ENCODE measurements at regions of chr6 and their contacts with region 1.

Region 1: DNA sequence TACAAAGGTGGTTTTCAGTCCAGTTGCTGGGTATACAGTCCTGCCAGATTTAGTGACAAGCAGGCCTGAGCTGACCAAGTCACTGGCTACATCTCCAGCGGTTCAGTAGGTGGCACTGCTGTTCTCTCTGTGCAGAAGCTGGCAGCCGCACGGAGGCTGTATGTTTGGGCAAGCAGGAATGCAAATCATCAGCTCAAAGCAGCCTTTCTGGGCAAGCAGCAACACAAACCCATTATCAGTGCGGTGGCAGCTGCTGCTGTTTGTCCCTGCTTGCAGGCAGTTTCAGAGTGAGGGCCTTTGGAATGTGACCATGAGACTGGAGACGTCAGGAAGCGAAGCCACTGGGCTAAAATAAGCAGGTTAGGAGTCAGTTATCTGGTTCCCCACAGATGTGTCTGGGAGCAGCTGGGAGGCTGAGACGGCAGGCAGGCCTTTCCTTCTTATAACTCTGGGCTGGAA is 72.5 kb downstream of the TXLNB start:
- DNase-seq: peak; percentile 83
- ATAC-seq: peak; percentile 100
- H3K4me3 ChIP-seq: no peak overlapping the region
- H3K4me3 Mint-ChIP-seq: peak overlapping the region; percentile 40
- H3K27ac ChIP-seq: no peak overlapping the region
- H3K27ac Mint-ChIP-seq: peak overlapping the region; percentile 79
- H3K4me1 ChIP-seq: peaks cover 4 to 8% of the 10 kb centered on the region in 2 donors
- H3K4me1 Mint-ChIP-seq: peaks cover 13% of the 10 kb centered on the region
- H3K27me3 ChIP-seq: no peaks in the 10 kb centered on the region
- H3K27me3 Mint-ChIP-seq: no peaks in the 10 kb centered on the region
- CTCF ChIP-seq: peak; percentile 84

Region 2: GRCh38 chr6:138817822-138818308 is 401.4 kb before region 1 on chr6:
- CTCF ChIA-PET with region 1: interaction called, 22 read pairs
- POLR2A ChIA-PET with region 1: no interaction called
- intact Hi-C with region 1: loop called (anchors 1 kb)
- DNase-seq: peak; percentile 13
- ATAC-seq: peak; percentile 15
- H3K4me3 ChIP-seq: no peak overlapping the region
- H3K4me3 Mint-ChIP-seq: no peak overlapping the region
- H3K27ac ChIP-seq: peak overlapping the region in 1 of 2 donors; percentile 28
- H3K27ac Mint-ChIP-seq: peak overlapping the region; percentile 68
- H3K4me1 ChIP-seq: peaks cover 11 to 20% of the 10 kb centered on the region in 2 donors
- H3K4me1 Mint-ChIP-seq: peaks cover 30% of the 10 kb centered on the region
- H3K27me3 ChIP-seq: no peaks in the 10 kb centered on the region
- H3K27me3 Mint-ChIP-seq: no peaks in the 10 kb centered on the region
- CTCF ChIP-seq: no peak

Region 3: GRCh38 chr6:139124887-139125672 is 94.2 kb before region 1 on chr6:
- CTCF ChIA-PET with region 1: interaction called, 50 read pairs
- POLR2A ChIA-PET with region 1: no interaction called
- intact Hi-C with region 1: loop called (anchors 1 kb)
- DNase-seq: peak; percentile 84
- ATAC-seq: peak; percentile 100
- H3K4me3 ChIP-seq: peak overlapping the region in 2 of 5 experiments; percentile 13 to 18
- H3K4me3 Mint-ChIP-seq: peak overlapping the region; percentile 76
- H3K27ac ChIP-seq: peak overlapping the region; percentile 58 to 76
- H3K27ac Mint-ChIP-seq: peak overlapping the region; percentile 93
- H3K4me1 ChIP-seq: peaks cover 20 to 22% of the 10 kb centered on the region in 2 donors
- H3K4me1 Mint-ChIP-seq: peaks cover 41% of the 10 kb centered on the region
- H3K27me3 ChIP-seq: no peaks in the 10 kb centered on the region
- H3K27me3 Mint-ChIP-seq: no peaks in the 10 kb centered on the region
- CTCF ChIP-seq: peak; percentile 73

Region 4: GRCh38 chr6:139204978-139205377 is 14.3 kb before region 1 on chr6:
- CTCF ChIA-PET with region 1: interaction called, 12 read pairs
- POLR2A ChIA-PET with region 1: no interaction called
- intact Hi-C with region 1: no loop called
- DNase-seq: no peak
- ATAC-seq: no peak
- H3K4me3 ChIP-seq: no peak overlapping the region
- H3K4me3 Mint-ChIP-seq: no peak overlapping the region
- H3K27ac ChIP-seq: no peak overlapping the region
- H3K27ac Mint-ChIP-seq: no peak overlapping the region
- H3K4me1 ChIP-seq: no peaks in the 10 kb centered on the region
- H3K4me1 Mint-ChIP-seq: no peaks in the 10 kb centered on the region
- H3K27me3 ChIP-seq: no peaks in the 10 kb centered on the region
- H3K27me3 Mint-ChIP-seq: no peaks in the 10 kb centered on the region
- CTCF ChIP-seq: no peak

Region 5: GRCh38 chr6:139250296-139251044 is 31.2 kb after region 1 on chr6:
- CTCF ChIA-PET with region 1: interaction called, 16 read pairs
- POLR2A ChIA-PET with region 1: interaction called, 6 read pairs
- intact Hi-C with region 1: loop called (anchors 1 kb)
- DNase-seq: peak; percentile 65
- ATAC-seq: peak; percentile 99
- H3K4me3 ChIP-seq: no peak overlapping the region
- H3K4me3 Mint-ChIP-seq: no peak overlapping the region
- H3K27ac ChIP-seq: no peak overlapping the region
- H3K27ac Mint-ChIP-seq: no peak overlapping the region
- H3K4me1 ChIP-seq: peaks cover 5 to 6% of the 10 kb centered on the region in 2 donors
- H3K4me1 Mint-ChIP-seq: peaks cover 13% of the 10 kb centered on the region
- H3K27me3 ChIP-seq: no peaks in the 10 kb centered on the region
- H3K27me3 Mint-ChIP-seq: no peaks in the 10 kb centered on the region
- CTCF ChIP-seq: peak; percentile 78

Region 6: GRCh38 chr6:139291813-139292619 is 72.7 kb after region 1 on chr6 and contains the start of gene TXLNB:
- CTCF ChIA-PET with region 1: interaction called, 19 read pairs
- POLR2A ChIA-PET with region 1: no interaction called
- intact Hi-C with region 1: loop called (anchors 1 kb)
- DNase-seq: peak; percentile 77
- ATAC-seq: peak; percentile 49
- H3K4me3 ChIP-seq: peak within 1 kb of the TSS; percentile 17 to 66 (median 34)
- H3K4me3 Mint-ChIP-seq: peak within 1 kb of the TSS; percentile 84
- H3K27ac ChIP-seq: peak within 1 kb of the TSS; percentile 93
- H3K27ac Mint-ChIP-seq: peak within 1 kb of the TSS; percentile 95
- H3K4me1 ChIP-seq: peaks cover 41 to 49% of the 10 kb centered on the region in 2 donors
- H3K4me1 Mint-ChIP-seq: peaks cover 73% of the 10 kb centered on the region
- H3K27me3 ChIP-seq: no peaks in the 10 kb centered on the region
- H3K27me3 Mint-ChIP-seq: no peaks in the 10 kb centered on the region
- CTCF ChIP-seq: no peak
- total RNA-seq, gene TXLNB: 3.3 and 3.6 TPM in 2 replicates

Region 7: GRCh38 chr6:139355172-139355571 is 135.9 kb after region 1 on chr6:
- CTCF ChIA-PET with region 1: interaction called, 57 read pairs
- POLR2A ChIA-PET with region 1: no interaction called
- intact Hi-C with region 1: no loop called
- DNase-seq: no peak
- ATAC-seq: no peak
- H3K4me3 ChIP-seq: no peak overlapping the region
- H3K4me3 Mint-ChIP-seq: no peak overlapping the region
- H3K27ac ChIP-seq: no peak overlapping the region
- H3K27ac Mint-ChIP-seq: no peak overlapping the region
- H3K4me1 ChIP-seq: no peaks in the 10 kb centered on the region
- H3K4me1 Mint-ChIP-seq: peaks cover 5% of the 10 kb centered on the region
- H3K27me3 ChIP-seq: no peaks in the 10 kb centered on the region
- H3K27me3 Mint-ChIP-seq: no peaks in the 10 kb centered on the region
- CTCF ChIP-seq: no peak

Region 8: GRCh38 chr6:141088171-141088570 is 1868.9 kb after region 1 on chr6:
- CTCF ChIA-PET with region 1: no interaction called
- POLR2A ChIA-PET with region 1: no interaction called
- intact Hi-C with region 1: no loop called
- DNase-seq: no peak
- ATAC-seq: no peak
- H3K4me3 ChIP-seq: no peak overlapping the region
- H3K4me3 Mint-ChIP-seq: no peak overlapping the region
- H3K27ac ChIP-seq: no peak overlapping the region
- H3K27ac Mint-ChIP-seq: no peak overlapping the region
- H3K4me1 ChIP-seq: no peaks in the 10 kb centered on the region
- H3K4me1 Mint-ChIP-seq: no peaks in the 10 kb centered on the region
- H3K27me3 ChIP-seq: no peaks in the 10 kb centered on the region
- H3K27me3 Mint-ChIP-seq: no peaks in the 10 kb centered on the region
- CTCF ChIP-seq: no peak

Measured in B cell (primary cell).